Natural killer cell (primary cell): ENCODE measurements at regions of chr11 and their contacts with region 1.

Region 1: DNA sequence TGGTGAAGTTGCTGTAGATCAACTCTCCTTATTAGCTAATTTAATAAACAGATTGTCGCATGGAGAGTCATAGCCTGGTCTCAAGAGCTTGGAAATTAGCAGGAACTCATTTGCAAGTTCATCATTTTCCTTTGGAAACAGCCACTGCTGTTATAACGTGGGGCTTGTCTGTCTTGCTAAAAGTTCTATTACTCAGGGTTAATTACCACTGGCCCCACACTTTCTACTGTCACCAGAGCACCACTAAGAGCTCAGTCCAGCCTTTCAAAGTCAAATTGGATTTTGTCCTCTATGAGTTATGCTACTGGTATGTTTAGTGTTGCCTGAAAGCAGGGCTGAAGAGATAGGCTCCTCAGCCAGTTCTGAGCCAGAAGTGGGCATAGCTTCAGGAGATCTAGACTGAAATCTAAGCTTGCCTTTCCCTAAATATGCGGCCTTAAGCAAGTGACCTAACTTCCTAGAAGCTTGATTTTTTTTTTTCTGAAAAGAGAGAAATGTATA is 292.2 kb downstream of the INSC start:
- DNase-seq: no peak
- ATAC-seq: no peak
- H3K4me3 ChIP-seq: no peak overlapping the region
- H3K4me3 Mint-ChIP-seq: no peak overlapping the region
- H3K27ac ChIP-seq: no peak overlapping the region
- H3K27ac Mint-ChIP-seq: no peak overlapping the region
- H3K4me1 ChIP-seq: no peaks in the 10 kb centered on the region
- H3K4me1 Mint-ChIP-seq: no peaks in the 10 kb centered on the region
- H3K27me3 ChIP-seq: no peaks in the 10 kb centered on the region
- H3K27me3 Mint-ChIP-seq: no peaks in the 10 kb centered on the region
- CTCF ChIP-seq: no peak

Region 2: DNA sequence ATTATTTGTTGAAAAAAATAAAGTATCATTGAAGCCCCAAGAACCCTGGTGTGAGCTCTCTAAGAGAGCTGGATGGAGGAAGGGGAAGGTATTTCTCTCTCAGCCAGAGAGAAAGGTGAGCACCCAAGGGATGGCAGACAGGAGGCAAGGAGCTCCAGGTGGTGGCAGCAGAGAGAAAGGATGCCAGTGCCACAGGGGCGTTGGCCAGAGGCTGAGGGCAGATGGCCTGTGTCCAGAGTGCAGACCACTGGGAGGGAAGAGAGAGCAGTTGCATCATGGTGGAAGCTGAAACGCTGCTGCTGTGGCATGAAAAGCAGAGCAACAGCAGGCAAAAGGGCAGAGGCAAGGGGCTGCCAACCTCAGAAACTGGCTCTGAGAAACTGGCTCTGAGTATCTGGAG is 1435.9 kb before region 1 on chr11:
- intact Hi-C with region 1: no loop called
- DNase-seq: peak in 1 of 2 donors; percentile 40
- ATAC-seq: no peak
- H3K4me3 ChIP-seq: no peak overlapping the region
- H3K4me3 Mint-ChIP-seq: no peak overlapping the region
- H3K27ac ChIP-seq: no peak overlapping the region
- H3K27ac Mint-ChIP-seq: no peak overlapping the region
- H3K4me1 ChIP-seq: no peaks in the 10 kb centered on the region
- H3K4me1 Mint-ChIP-seq: no peaks in the 10 kb centered on the region
- H3K27me3 ChIP-seq: no peaks in the 10 kb centered on the region
- H3K27me3 Mint-ChIP-seq: peaks cover 32 to 34% of the 10 kb centered on the region in 2 donors
- CTCF ChIP-seq: no peak

Region 3: DNA sequence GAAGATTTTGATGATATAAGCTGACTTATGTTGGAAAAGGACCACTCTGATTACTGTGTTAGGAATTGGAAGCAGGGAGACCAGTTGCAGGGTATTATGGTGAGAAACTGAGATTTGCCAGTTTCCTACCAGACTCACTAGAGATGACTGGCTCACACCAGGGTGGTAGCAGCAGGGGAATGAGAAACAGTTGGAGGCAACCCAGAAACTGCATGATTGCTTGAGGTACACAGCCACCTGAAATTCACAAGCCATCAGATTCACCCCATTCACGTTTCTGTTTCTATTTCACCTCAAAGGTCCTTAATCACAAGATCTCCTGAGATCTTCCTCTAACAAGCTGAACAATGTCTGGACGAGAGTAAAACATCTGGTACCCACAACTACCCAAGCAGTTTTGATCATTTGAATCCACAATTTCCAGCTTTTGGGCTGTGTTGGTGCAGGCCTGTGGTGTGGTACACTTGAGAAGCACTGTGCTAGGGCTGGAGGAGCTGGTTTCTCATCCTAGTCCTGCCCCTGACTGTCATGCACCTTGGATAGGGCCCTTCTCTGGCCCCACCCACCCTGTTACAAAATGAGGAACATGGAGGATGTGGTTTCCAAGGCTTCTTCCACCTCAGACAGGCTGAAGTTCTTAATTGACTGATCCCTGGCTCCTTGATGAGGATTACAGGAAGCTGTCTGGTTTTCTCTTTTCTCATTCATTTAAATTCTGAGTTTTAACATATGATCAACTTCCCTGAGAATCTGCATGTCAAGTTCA is 58.7 kb before region 1 on chr11:
- intact Hi-C with region 1: loop called (anchors 10 kb)
- DNase-seq: no peak
- ATAC-seq: no peak
- H3K4me3 ChIP-seq: no peak overlapping the region
- H3K4me3 Mint-ChIP-seq: no peak overlapping the region
- H3K27ac ChIP-seq: no peak overlapping the region
- H3K27ac Mint-ChIP-seq: no peak overlapping the region
- H3K4me1 ChIP-seq: no peaks in the 10 kb centered on the region
- H3K4me1 Mint-ChIP-seq: no peaks in the 10 kb centered on the region
- H3K27me3 ChIP-seq: no peaks in the 10 kb centered on the region
- H3K27me3 Mint-ChIP-seq: no peaks in the 10 kb centered on the region
- CTCF ChIP-seq: no peak

Region 4: DNA sequence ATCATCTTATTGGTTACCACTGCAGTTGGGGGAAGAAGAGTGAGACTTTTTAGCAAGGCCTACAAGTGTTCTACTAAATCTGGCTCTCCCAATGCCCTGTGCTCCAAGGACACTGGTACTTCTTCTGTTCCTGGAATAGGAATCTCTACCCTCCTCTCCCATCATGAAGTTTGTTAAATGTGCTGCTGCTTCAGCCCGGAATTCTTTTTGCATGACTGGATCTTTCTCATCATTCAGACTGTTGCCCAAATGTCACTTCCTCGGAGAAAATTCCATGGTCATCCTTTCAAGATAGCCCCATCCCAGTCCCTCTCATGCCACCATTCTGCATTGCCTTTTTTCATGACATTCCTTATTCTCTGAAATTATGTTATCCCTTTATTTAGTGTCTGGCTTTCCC is 548.7 kb after region 1 on chr11:
- intact Hi-C with region 1: no loop called
- DNase-seq: no peak
- ATAC-seq: no peak
- H3K4me3 ChIP-seq: no peak overlapping the region
- H3K4me3 Mint-ChIP-seq: no peak overlapping the region
- H3K27ac ChIP-seq: no peak overlapping the region
- H3K27ac Mint-ChIP-seq: no peak overlapping the region
- H3K4me1 ChIP-seq: no peaks in the 10 kb centered on the region
- H3K4me1 Mint-ChIP-seq: no peaks in the 10 kb centered on the region
- H3K27me3 ChIP-seq: no peaks in the 10 kb centered on the region
- H3K27me3 Mint-ChIP-seq: no peaks in the 10 kb centered on the region
- CTCF ChIP-seq: no peak